ENCODE measurements at regions of chr6 and their contacts with region 1.

Region 1: DNA sequence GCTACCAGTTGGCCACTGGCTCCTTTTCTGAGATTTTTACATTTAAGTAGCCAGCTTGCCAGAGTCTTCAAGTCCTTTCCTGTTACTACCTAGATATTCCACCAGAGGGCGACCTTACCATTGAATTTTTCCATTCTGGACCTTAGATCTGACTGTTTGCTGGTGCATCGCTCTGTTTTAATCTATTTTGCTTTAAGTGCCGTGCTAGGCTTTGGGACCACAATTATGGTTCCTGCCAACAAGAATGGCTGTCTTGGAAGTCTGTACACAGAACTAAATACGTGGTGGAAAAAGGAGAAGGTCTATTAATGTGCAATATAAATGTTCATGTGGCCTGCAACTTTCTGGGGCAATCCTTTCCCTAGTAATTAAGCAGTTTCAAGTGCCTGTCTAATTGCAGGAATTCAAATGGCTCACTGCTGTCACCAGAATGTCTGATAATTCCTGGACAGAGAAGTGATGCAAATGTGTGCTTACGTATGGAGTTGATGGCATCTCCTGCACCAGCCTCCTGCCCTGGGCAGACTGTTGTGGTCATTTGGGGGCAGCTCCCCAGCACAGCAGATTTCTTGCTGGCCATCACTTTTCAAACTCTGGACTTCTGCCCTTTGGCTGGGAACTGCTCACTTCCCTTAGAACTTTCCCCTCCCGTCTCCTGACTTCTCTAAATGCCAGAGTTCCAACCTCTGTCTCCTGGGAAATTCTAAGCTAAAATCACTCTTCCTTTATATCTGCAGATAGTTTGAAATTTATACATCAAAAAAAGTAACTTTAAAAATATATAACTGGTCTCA is 5.6 kb upstream of the HLA-DOA start:
- DNase-seq: peak; percentile 45 to 92
- H3K4me3 ChIP-seq: no peak overlapping the region
- H3K27ac ChIP-seq: peak overlapping the region in 1 of 5 donors; percentile 32
- H3K4me1 ChIP-seq: peaks cover 15 to 35% (median 24%) of the 10 kb centered on the region in 4 donors
- H3K27me3 ChIP-seq: peaks cover 0 to 29% (median 4%) of the 10 kb centered on the region in 3 donors
- CTCF ChIP-seq: peak in 6 of 7 experiments; percentile 7 to 88 (median 84)
- EP300 ChIP-seq: no peak
- POLR2A ChIP-seq: no peak

Region 2: DNA sequence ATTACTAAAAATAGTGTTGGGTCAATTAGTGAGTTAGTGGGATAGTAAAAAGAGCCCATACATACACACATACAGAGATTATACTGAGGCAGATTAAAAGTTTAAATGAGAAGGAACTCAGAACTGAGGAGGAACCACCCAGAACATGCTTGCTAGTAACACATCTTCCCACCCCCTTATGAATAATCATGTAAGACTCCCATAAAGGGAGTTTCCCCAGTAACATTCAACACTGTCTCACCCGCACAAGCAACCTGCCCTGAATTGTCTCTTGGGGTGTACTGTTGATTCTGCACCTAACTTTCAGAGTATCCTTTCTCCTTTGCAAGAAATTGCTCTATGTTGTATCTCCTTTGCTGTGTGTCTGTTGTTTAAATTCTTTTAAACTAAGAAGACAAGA is 240.6 kb before region 1 on chr6:
- intact Hi-C with region 1: no loop called
- DNase-seq: no peak
- H3K4me3 ChIP-seq: no peak overlapping the region
- H3K27ac ChIP-seq: no peak overlapping the region
- H3K4me1 ChIP-seq: no peaks in the 10 kb centered on the region
- H3K27me3 ChIP-seq: peaks cover 0 to 20% (median 3%) of the 10 kb centered on the region in 3 donors
- CTCF ChIP-seq: no peak
- EP300 ChIP-seq: no peak
- POLR2A ChIP-seq: no peak

Region 3: GRCh38 chr6:33082702-33083101 is 67.7 kb after region 1 on chr6:
- intact Hi-C with region 1: loop called (anchors 5 kb)
- DNase-seq: peak in 1 of 2 donors; percentile 62
- H3K4me3 ChIP-seq: no peak overlapping the region
- H3K27ac ChIP-seq: peak overlapping the region in 2 of 5 donors; percentile 18 to 22
- H3K4me1 ChIP-seq: peaks cover 0 to 34% (median 15%) of the 10 kb centered on the region in 4 donors
- H3K27me3 ChIP-seq: no peaks in the 10 kb centered on the region
- CTCF ChIP-seq: peak in 5 of 7 experiments; percentile 43 to 91 (median 53)
- EP300 ChIP-seq: no peak
- POLR2A ChIP-seq: no peak